Spleen (tissue), 13 donors: ENCODE measurements at regions of chr1 and their contacts with region 1.

Region 1: DNA sequence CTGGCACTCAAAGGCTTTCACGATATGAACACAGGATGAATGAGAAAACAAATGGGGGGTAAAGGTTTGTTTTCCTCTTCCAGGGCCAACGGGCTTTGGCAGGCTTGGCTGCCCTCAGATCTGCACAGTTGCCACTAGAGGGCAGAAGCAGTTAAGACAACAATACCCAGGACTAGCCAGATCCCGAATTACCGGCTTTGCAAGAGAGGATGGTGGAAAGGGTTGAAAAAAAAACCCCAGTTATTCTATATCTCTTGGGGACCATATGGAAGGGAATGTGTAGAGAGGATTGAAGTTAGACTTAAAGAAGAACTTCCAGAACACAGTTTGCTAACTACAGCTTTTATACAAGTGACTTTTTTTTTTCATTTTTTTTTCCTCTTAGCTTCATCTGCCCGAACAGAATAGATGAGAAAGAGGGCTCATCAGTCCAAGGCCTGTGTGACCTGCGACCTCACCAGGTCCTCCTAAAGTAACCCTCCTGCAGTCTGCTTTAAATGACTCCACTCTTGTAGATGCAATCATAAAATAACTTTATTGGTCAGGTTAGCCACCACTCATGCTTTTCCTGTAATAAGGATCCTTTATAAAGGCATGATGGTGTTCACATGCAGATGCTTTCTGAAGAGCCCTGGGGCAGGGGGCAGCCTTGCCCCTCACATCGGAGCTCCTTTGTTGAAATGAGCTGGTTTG is 10.7 kb downstream of the FMOD start:
- DNase-seq: peak; percentile 82
- H3K4me3 ChIP-seq: no peak overlapping the region
- H3K27ac ChIP-seq: peak overlapping the region in 1 of 8 donors; percentile 18
- H3K4me1 ChIP-seq: peaks cover 0 to 52% (median 24%) of the 10 kb centered on the region in 6 donors
- H3K27me3 ChIP-seq: peaks cover 0 to 37% (median 5%) of the 10 kb centered on the region in 7 donors
- CTCF ChIP-seq: peak; percentile 83 to 95 (median 91)
- POLR2A ChIP-seq: no peak

Region 2: DNA sequence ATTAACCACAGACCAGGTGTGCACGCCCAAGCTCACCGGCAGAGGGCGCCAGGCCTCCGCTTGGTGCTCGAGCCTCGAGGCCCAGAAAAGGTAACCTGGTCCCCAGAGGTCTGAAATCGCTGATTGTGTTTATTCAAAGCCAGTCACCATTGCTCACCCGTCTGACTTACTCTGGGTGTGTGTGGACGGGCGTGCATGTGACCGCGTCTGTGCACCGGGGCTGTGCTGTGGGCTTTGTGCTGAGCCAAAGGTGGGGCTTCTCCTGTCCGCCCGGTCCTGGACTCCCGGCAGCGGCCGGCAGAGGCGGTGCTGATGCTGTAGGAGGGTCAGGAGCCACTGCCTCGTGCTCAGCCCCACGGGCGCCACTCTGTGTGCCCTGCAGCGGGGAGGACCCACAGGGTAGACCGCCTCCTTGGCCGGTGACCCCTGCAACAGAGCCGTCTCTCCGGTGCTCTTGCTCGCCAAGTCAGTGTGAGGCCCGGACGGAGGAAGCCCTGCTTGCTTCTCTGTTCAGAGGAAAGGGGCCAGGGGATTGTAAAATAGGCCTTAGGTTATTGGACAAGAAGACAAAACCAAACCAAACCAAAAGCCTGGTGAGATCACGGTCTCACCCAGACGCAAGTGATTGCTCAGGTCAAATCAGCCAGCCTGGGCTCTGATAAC is 66.9 kb before region 1 on chr1:
- intact Hi-C with region 1: loop called (anchors 5 kb)
- DNase-seq: peak; percentile 98
- H3K4me3 ChIP-seq: peak overlapping the region; percentile 24 to 69 (median 41)
- H3K27ac ChIP-seq: peak overlapping the region; percentile 66 to 90 (median 86)
- H3K4me1 ChIP-seq: peaks cover 38 to 100% (median 76%) of the 10 kb centered on the region in 6 donors
- H3K27me3 ChIP-seq: no peaks in the 10 kb centered on the region
- CTCF ChIP-seq: peak; percentile 91 to 99 (median 99)
- POLR2A ChIP-seq: no peak

Region 3: DNA sequence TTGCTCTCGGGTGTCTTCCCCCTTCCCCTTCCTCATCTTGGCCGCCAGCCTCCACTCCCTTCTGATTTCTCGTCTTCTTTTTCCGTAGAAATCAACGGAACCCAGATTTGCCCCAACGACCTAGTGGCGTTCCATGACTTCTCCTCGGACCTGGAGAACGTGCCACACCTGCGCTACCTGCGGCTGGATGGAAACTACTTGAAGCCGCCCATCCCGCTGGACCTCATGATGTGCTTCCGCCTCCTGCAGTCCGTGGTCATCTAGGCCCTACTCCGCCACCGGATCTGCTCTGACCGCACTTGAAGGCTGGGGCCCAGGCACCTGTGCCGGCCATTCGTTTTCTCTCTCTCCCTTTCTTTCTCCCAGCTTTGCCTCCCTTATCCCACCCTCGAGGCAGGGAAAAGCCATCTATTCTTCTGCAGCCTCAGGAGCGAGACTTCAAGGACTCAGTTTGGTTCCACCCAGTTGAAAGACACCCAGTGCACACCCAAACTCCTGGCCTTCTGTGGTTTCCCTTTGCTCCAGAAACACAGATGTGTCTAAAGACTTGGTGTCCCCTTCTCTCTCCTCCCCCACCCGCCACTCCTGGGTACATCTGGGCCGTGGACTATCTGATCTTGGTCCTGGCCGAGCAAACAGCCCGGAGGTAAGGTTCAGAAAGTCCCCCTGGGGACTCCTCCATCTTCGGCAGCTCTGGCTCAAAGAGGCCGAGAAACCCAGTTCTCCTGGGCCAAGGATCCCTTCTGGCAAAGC is 146.5 kb after region 1 on chr1:
- intact Hi-C with region 1: loop called (anchors 2 kb)
- DNase-seq: no peak
- H3K4me3 ChIP-seq: peak overlapping the region in 3 of 8 donors; percentile 39 to 67 (median 46)
- H3K27ac ChIP-seq: peak overlapping the region in 7 of 8 donors; percentile 57 to 65 (median 60)
- H3K4me1 ChIP-seq: peaks cover 8 to 54% (median 14%) of the 10 kb centered on the region in 6 donors
- H3K27me3 ChIP-seq: peaks cover 0 to 14% (median 0%) of the 10 kb centered on the region in 7 donors
- CTCF ChIP-seq: no peak
- POLR2A ChIP-seq: no peak

Region 4: GRCh38 chr1:203504397-203505250 is 164.4 kb after region 1 on chr1:
- intact Hi-C with region 1: no loop called
- DNase-seq: peak; percentile 85
- H3K4me3 ChIP-seq: no peak overlapping the region
- H3K27ac ChIP-seq: no peak overlapping the region
- H3K4me1 ChIP-seq: peaks cover 3 to 29% (median 16%) of the 10 kb centered on the region in 6 donors
- H3K27me3 ChIP-seq: peaks cover 0 to 22% (median 0%) of the 10 kb centered on the region in 7 donors
- CTCF ChIP-seq: peak; percentile 76 to 95 (median 90)
- POLR2A ChIP-seq: no peak

Region 5: GRCh38 chr1:203702130-203702577 is 361.9 kb after region 1 on chr1:
- intact Hi-C with region 1: loop called (anchors 10 kb)
- DNase-seq: no peak
- H3K4me3 ChIP-seq: no peak overlapping the region
- H3K27ac ChIP-seq: no peak overlapping the region
- H3K4me1 ChIP-seq: peaks cover 0 to 17% (median 0%) of the 10 kb centered on the region in 6 donors
- H3K27me3 ChIP-seq: no peaks in the 10 kb centered on the region
- CTCF ChIP-seq: peak; percentile 80 to 97 (median 86)
- POLR2A ChIP-seq: no peak